GM12878 (cell line): ENCODE measurements at regions of chr14 and their contacts with region 1.

Region 1: DNA sequence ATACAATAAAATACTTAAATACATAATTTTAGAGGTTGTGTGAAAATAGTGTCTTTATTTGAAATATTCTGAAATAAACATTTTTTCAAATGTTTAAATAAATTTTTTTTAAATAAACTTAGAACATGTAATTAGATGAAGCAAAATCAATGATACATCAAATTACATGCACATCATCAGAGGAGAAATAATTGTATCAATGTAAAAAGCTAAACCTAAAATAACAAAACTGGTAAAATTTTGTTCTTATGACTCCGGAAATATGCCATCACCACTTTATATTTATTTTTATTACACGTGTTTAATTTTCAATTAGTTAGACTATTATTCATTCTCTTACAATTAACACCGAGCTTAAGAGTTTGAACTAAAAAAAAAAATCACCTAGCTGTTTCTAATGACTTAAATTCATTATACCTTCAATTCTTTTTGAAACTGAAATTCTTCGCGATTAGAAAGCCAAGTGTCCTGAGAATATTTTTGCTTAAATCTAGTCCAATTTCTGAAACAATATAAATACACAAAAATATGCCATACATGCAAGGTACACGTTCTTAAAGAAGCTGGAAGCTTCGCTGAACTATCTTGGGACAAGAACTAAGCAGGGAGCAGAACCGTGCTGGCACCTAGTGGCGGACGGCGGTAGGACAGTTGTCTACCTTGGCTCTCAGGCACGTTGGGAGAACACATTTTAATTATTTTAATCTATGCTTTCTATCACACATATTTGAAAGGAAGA is 230.5 kb downstream of the SLC25A21 start:
- DNase-seq: no peak
- ATAC-seq: peak; percentile 85
- H3K4me3 ChIP-seq: no peak overlapping the region
- H3K27ac ChIP-seq: no peak overlapping the region
- H3K4me1 ChIP-seq: no peaks in the 10 kb centered on the region
- H3K27me3 ChIP-seq: no peaks in the 10 kb centered on the region
- CTCF ChIP-seq: peak; percentile 91 to 98 (median 95)
- EP300 ChIP-seq: no peak
- POLR2A ChIP-seq: no peak
- RAD21 ChIP-seq: peak; percentile 95

Region 2: GRCh38 chr14:36553656-36554260 is 388.2 kb before region 1 on chr14:
- CTCF ChIA-PET with region 1: interaction called, 134 read pairs
- POLR2A ChIA-PET with region 1: no interaction called
- RAD21 ChIA-PET with region 1: interaction called, 62 read pairs
- SMC1A ChIA-PET with region 1: interaction called, 50 read pairs
- in situ Hi-C with region 1: no loop called
- intact Hi-C with region 1: loop called (anchors 2 kb)
- DNase-seq: no peak
- ATAC-seq: peak; percentile 73
- H3K4me3 ChIP-seq: no peak overlapping the region
- H3K27ac ChIP-seq: no peak overlapping the region
- H3K4me1 ChIP-seq: no peaks in the 10 kb centered on the region
- H3K27me3 ChIP-seq: no peaks in the 10 kb centered on the region
- CTCF ChIP-seq: peak; percentile 48 to 71 (median 62); a peak in 5 of 6 replicates
- EP300 ChIP-seq: no peak
- POLR2A ChIP-seq: no peak
- RAD21 ChIP-seq: peak; percentile 61

Region 3: GRCh38 chr14:36647824-36648753 is 293.9 kb before region 1 on chr14:
- CTCF ChIA-PET with region 1: interaction called, 29 read pairs
- POLR2A ChIA-PET with region 1: no interaction called
- RAD21 ChIA-PET with region 1: interaction called, 7 read pairs
- SMC1A ChIA-PET with region 1: interaction called, 8 read pairs
- in situ Hi-C with region 1: loop called (anchors 10 kb)
- intact Hi-C with region 1: no loop called
- DNase-seq: no peak
- ATAC-seq: no peak
- H3K4me3 ChIP-seq: no peak overlapping the region
- H3K27ac ChIP-seq: no peak overlapping the region
- H3K4me1 ChIP-seq: no peaks in the 10 kb centered on the region
- H3K27me3 ChIP-seq: peaks cover 1 to 7% of the 10 kb centered on the region in 2 experiments; a peak in 3 of 4 replicates
- CTCF ChIP-seq: 0 out of 6 replicates have a peak, but pooled peaks of 1 of the 3 experiments have one; percentile 11
- EP300 ChIP-seq: no peak
- POLR2A ChIP-seq: no peak
- RAD21 ChIP-seq: 0 out of 2 replicates have a peak, but pooled peaks have one; percentile 20

Region 4: GRCh38 chr14:36661756-36662498 is 280.0 kb before region 1 on chr14 and contains the start of gene PAX9:
- CTCF ChIA-PET with region 1: interaction called, 17 read pairs
- POLR2A ChIA-PET with region 1: no interaction called
- RAD21 ChIA-PET with region 1: interaction called, 13 read pairs
- SMC1A ChIA-PET with region 1: interaction called, 9 read pairs
- in situ Hi-C with region 1: loop called (anchors 10 kb)
- intact Hi-C with region 1: loop called (anchors 2 kb)
- DNase-seq: peak; percentile 23
- ATAC-seq: peak; percentile 77
- H3K4me3 ChIP-seq: no peak within 1 kb of the TSS
- H3K27ac ChIP-seq: no peak within 1 kb of the TSS
- H3K4me1 ChIP-seq: no peaks in the 10 kb centered on the region
- H3K27me3 ChIP-seq: peaks cover 5 to 17% of the 10 kb centered on the region in 2 experiments; a peak in 3 of 4 replicates
- CTCF ChIP-seq: no peak
- EP300 ChIP-seq: no peak
- POLR2A ChIP-seq: no peak
- RAD21 ChIP-seq: no peak
- polyA plus RNA-seq, gene PAX9: not detected

Region 5: GRCh38 chr14:36773136-36773540 is 168.8 kb before region 1 on chr14:
- CTCF ChIA-PET with region 1: interaction called, 27 read pairs
- POLR2A ChIA-PET with region 1: no interaction called
- RAD21 ChIA-PET with region 1: interaction called, 22 read pairs
- SMC1A ChIA-PET with region 1: interaction called, 8 read pairs
- in situ Hi-C with region 1: no loop called
- intact Hi-C with region 1: loop called (anchors 1 kb)
- DNase-seq: no peak
- ATAC-seq: peak; percentile 66
- H3K4me3 ChIP-seq: no peak overlapping the region
- H3K27ac ChIP-seq: no peak overlapping the region
- H3K4me1 ChIP-seq: no peaks in the 10 kb centered on the region
- H3K27me3 ChIP-seq: no peaks in the 10 kb centered on the region
- CTCF ChIP-seq: peak in 1 of 3 experiments; percentile 15; a peak in 1 of 6 replicates
- EP300 ChIP-seq: no peak
- POLR2A ChIP-seq: no peak
- RAD21 ChIP-seq: no peak

Region 6: GRCh38 chr14:36916668-36917067 is 25.3 kb before region 1 on chr14:
- CTCF ChIA-PET with region 1: interaction called, 3 read pairs
- POLR2A ChIA-PET with region 1: no interaction called
- RAD21 ChIA-PET with region 1: interaction called, 11 read pairs
- SMC1A ChIA-PET with region 1: no interaction called
- in situ Hi-C with region 1: no loop called
- intact Hi-C with region 1: no loop called
- DNase-seq: no peak
- ATAC-seq: no peak
- H3K4me3 ChIP-seq: no peak overlapping the region
- H3K27ac ChIP-seq: no peak overlapping the region
- H3K4me1 ChIP-seq: no peaks in the 10 kb centered on the region
- H3K27me3 ChIP-seq: no peaks in the 10 kb centered on the region
- CTCF ChIP-seq: no peak
- EP300 ChIP-seq: no peak
- POLR2A ChIP-seq: no peak
- RAD21 ChIP-seq: no peak

Region 7: DNA sequence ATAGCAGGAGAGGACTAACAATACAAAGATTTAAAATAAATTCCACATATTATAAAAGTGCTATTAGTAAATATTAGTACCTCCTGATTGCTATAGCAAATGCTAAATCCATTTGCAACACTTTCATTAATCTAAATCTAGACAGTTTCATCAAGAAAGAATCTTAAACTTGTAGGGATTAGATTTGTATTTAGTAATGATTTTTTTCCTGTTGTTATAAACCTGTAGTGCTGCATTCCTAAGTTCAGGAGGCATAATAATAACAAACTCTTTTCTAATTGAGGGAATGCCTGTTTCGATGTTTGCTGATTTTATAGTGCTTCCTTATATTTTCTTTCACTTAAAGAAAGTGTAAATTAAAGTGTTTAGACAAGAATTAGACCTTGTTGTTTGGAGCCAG is 487.0 kb after region 1 on chr14:
- CTCF ChIA-PET with region 1: no interaction called
- POLR2A ChIA-PET with region 1: no interaction called
- RAD21 ChIA-PET with region 1: no interaction called
- SMC1A ChIA-PET with region 1: no interaction called
- in situ Hi-C with region 1: no loop called
- intact Hi-C with region 1: no loop called
- DNase-seq: no peak
- ATAC-seq: no peak
- H3K4me3 ChIP-seq: no peak overlapping the region
- H3K27ac ChIP-seq: no peak overlapping the region
- H3K4me1 ChIP-seq: no peaks in the 10 kb centered on the region
- H3K27me3 ChIP-seq: no peaks in the 10 kb centered on the region
- CTCF ChIP-seq: no peak
- EP300 ChIP-seq: no peak
- POLR2A ChIP-seq: no peak
- RAD21 ChIP-seq: no peak

Region 8: GRCh38 chr14:37855871-37856270 is 913.9 kb after region 1 on chr14:
- CTCF ChIA-PET with region 1: no interaction called
- POLR2A ChIA-PET with region 1: no interaction called
- RAD21 ChIA-PET with region 1: no interaction called
- SMC1A ChIA-PET with region 1: no interaction called
- in situ Hi-C with region 1: no loop called
- intact Hi-C with region 1: no loop called
- DNase-seq: no peak
- ATAC-seq: no peak
- H3K4me3 ChIP-seq: no peak overlapping the region
- H3K27ac ChIP-seq: no peak overlapping the region
- H3K4me1 ChIP-seq: no peaks in the 10 kb centered on the region
- H3K27me3 ChIP-seq: no peaks in the 10 kb centered on the region
- CTCF ChIP-seq: no peak
- EP300 ChIP-seq: no peak
- POLR2A ChIP-seq: no peak
- RAD21 ChIP-seq: no peak